ENCODE measurements at regions of chr9 and their contacts with region 1.

Region 1: DNA sequence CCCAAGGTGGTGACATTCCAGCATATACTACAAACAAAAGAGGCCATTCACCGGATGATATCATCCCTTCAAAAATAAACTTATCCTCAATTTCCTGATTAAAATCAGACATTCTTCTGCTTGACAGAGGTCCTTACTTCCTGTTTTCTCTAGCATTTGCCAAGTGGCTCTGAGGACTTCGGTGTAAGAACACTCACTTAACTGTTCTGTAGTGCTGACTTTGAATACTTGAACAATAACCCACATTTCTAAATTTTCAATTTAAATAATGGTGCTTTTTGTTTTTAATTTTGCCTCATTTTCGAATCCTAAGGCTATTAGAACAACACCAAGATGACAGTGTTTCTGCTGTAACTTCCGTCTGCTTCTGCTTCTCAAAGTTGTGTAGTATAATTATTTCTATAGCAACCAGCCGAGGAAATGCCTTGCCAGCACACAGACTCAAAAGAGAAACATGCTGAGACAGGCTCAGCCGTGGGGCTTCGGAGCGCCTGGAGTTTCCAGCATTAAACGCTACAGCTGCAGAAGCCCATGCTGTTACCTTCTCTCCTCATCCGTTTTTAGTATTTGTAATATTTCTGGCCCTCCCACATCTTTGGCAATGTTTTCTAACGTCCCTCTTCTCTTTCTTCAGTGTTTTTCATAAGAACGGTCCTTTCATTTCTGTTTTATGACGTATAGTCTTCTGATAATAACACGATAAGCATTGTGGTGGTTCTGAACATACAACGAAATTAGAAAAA is 19.5 kb upstream of the ANXA1 start:
- DNase-seq: peak; percentile 61
- ATAC-seq: peak; percentile 80
- H3K4me3 ChIP-seq: peak overlapping the region; percentile 74
- H3K27ac ChIP-seq: peak overlapping the region; percentile 75
- H3K4me1 ChIP-seq: peaks cover 49% of the 10 kb centered on the region
- H3K27me3 ChIP-seq: no peaks in the 10 kb centered on the region
- CTCF ChIP-seq: no peak

Region 2: GRCh38 chr9:73114058-73114457 is 18.1 kb before region 1 on chr9:
- CTCF ChIA-PET with region 1: no interaction called
- POLR2A ChIA-PET with region 1: interaction called, 3 read pairs
- intact Hi-C with region 1: loop called (anchors 1 kb)
- DNase-seq: no peak
- ATAC-seq: no peak
- H3K4me3 ChIP-seq: no peak overlapping the region
- H3K27ac ChIP-seq: no peak overlapping the region
- H3K4me1 ChIP-seq: peaks cover 21% of the 10 kb centered on the region
- H3K27me3 ChIP-seq: no peaks in the 10 kb centered on the region
- CTCF ChIP-seq: no peak

Region 3: GRCh38 chr9:73149371-73150067 is 17.3 kb after region 1 on chr9:
- CTCF ChIA-PET with region 1: no interaction called
- POLR2A ChIA-PET with region 1: interaction called, 3 read pairs
- intact Hi-C with region 1: loop called (anchors 2 kb)
- DNase-seq: peak; percentile 79
- ATAC-seq: peak; percentile 23
- H3K4me3 ChIP-seq: peak overlapping the region; percentile 52
- H3K27ac ChIP-seq: peak overlapping the region; percentile 90
- H3K4me1 ChIP-seq: peaks cover 63% of the 10 kb centered on the region
- H3K27me3 ChIP-seq: no peaks in the 10 kb centered on the region
- CTCF ChIP-seq: no peak

Region 4: DNA sequence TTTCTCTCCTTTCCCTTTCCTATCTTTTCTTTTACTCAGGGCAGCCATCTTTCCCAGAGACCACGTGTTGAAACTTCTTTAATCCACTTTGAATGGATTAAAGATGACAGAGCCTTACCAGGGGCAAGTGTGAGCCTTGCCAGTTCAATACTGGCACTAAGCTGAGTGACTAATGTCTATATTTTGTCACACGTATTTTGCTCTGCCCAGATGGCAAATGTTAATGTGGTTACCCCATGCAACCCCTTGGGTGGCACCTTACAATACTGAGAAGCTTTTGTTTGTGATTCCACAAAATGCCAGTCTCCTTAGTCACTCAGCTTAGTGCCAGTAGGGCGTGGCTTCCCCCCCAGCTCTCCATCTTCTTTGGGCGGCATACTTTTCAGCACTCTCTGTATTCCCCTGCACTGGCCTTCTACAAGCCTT is 44.3 kb after region 1 on chr9:
- CTCF ChIA-PET with region 1: no interaction called
- POLR2A ChIA-PET with region 1: interaction called, 6 read pairs
- intact Hi-C with region 1: loop called (anchors 1 kb)
- DNase-seq: peak; percentile 91
- ATAC-seq: peak; percentile 75
- H3K4me3 ChIP-seq: no peak overlapping the region
- H3K27ac ChIP-seq: peak overlapping the region; percentile 82
- H3K4me1 ChIP-seq: peaks cover 50% of the 10 kb centered on the region
- H3K27me3 ChIP-seq: no peaks in the 10 kb centered on the region
- CTCF ChIP-seq: no peak

Measured in PC-3 (cell line).